ENCODE measurements at regions of chr14 and their contacts with region 1.

Region 1: DNA sequence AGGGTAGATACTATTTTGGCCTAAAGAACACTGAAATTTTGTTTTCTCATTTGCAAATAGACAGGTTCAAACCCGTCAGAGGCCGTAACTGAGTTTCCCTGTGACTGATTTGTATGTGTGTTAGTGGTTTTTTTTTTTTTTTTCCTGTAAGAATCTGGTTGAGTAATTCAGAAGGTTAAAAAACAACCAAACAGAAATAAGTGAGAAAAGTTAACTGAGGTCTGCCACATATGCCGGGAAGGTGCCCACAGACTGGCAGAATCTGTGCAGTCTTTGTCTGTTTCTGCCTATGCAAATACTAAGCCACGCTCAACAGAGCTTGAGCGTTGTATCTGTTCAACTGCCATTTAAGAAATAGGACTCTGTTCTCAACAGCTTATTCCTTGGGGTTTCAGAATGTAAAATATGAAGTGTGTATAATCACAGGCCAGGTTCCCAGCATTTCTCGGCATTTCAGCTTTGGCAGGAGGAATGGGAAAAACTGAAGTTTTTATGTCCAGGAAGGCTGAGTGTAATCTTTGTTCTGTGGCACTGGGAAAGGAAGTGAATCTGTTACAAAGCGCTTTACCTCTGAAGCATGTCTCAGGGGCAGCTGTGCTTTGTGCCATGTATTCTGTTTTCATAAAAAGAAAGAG is 181.9 kb downstream of the PRKCH start:
- DNase-seq: peak; percentile 94
- ATAC-seq: peak; percentile 93
- H3K4me3 ChIP-seq: peak overlapping the region; percentile 19; the same call in 1 of the 2 replicates
- H3K27ac ChIP-seq: peak overlapping the region; percentile 95
- H3K4me1 ChIP-seq: peaks cover 30% of the 10 kb centered on the region
- H3K27me3 ChIP-seq: no peaks in the 10 kb centered on the region
- CTCF ChIP-seq: no peak
- EP300 ChIP-seq: peak; percentile 30 to 87; a peak in 3 of 4 replicates
- POLR2A ChIP-seq: no peak
- RAD21 ChIP-seq: no peak

Region 2: DNA sequence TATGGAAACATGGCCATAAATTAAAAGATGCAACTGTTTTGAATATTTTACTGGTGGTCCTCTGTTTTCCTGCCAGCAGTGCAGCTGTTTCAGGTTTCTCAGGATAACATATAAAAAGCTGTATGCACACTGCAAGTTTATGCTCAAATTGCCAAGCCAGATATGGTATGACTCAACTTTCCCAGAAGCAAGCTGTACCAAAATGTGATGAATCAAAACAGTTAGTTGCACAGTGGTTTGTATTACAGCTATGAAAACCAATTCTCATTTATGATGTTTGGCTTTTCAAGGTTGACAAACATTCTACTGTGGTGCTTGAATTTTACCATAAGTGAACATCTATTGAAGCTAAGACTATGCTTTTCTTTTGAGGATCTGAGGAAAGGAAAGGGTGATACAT is 537.9 kb before region 1 on chr14:
- CTCF ChIA-PET with region 1: no interaction called
- POLR2A ChIA-PET with region 1: no interaction called
- RAD21 ChIA-PET with region 1: no interaction called
- SMC1A ChIA-PET with region 1: no interaction called
- in situ Hi-C with region 1: no loop called
- intact Hi-C with region 1: no loop called
- DNase-seq: no peak
- ATAC-seq: no peak
- H3K4me3 ChIP-seq: no peak overlapping the region
- H3K27ac ChIP-seq: no peak overlapping the region
- H3K4me1 ChIP-seq: no peaks in the 10 kb centered on the region
- H3K27me3 ChIP-seq: no peaks in the 10 kb centered on the region
- CTCF ChIP-seq: no peak
- EP300 ChIP-seq: no peak
- POLR2A ChIP-seq: no peak
- RAD21 ChIP-seq: no peak

Region 3: DNA sequence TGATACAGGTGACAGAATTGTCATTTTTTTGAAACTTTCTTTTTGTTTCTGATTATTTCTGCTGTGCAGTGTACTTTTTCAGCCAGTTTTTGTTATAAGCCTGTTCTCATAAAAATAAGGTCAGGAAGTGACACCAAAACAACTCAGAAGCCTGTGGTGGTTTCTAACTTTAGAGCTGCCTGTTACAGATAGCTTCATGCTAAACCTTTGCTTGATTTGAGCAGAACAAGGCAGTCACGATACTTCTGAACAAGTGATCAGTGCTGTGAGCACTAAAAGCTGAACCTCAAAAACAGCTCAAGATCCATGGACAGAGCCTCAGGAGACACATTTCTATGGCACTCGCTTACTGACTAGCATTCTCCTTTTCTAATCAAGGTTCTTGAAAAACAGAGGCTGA is 99.9 kb before region 1 on chr14:
- CTCF ChIA-PET with region 1: no interaction called
- POLR2A ChIA-PET with region 1: no interaction called
- RAD21 ChIA-PET with region 1: no interaction called
- SMC1A ChIA-PET with region 1: no interaction called
- in situ Hi-C with region 1: no loop called
- intact Hi-C with region 1: no loop called
- DNase-seq: peak; percentile 61
- ATAC-seq: peak; percentile 86
- H3K4me3 ChIP-seq: no peak overlapping the region
- H3K27ac ChIP-seq: peak overlapping the region; percentile 89
- H3K4me1 ChIP-seq: peaks cover 17% of the 10 kb centered on the region
- H3K27me3 ChIP-seq: no peaks in the 10 kb centered on the region
- CTCF ChIP-seq: no peak
- EP300 ChIP-seq: no peak
- POLR2A ChIP-seq: peak; percentile 35; the same call in 1 of the 2 replicates
- RAD21 ChIP-seq: no peak

Region 4: GRCh38 chr14:61420326-61420725 is 83.0 kb before region 1 on chr14:
- CTCF ChIA-PET with region 1: no interaction called
- POLR2A ChIA-PET with region 1: no interaction called
- RAD21 ChIA-PET with region 1: no interaction called
- SMC1A ChIA-PET with region 1: no interaction called
- in situ Hi-C with region 1: no loop called
- intact Hi-C with region 1: no loop called
- DNase-seq: no peak
- ATAC-seq: no peak
- H3K4me3 ChIP-seq: no peak overlapping the region
- H3K27ac ChIP-seq: no peak overlapping the region
- H3K4me1 ChIP-seq: peaks cover 15% of the 10 kb centered on the region; the same call in 1 of the 2 replicates
- H3K27me3 ChIP-seq: no peaks in the 10 kb centered on the region
- CTCF ChIP-seq: no peak
- EP300 ChIP-seq: no peak
- POLR2A ChIP-seq: no peak
- RAD21 ChIP-seq: no peak

Region 5: GRCh38 chr14:61491876-61492440 is 11.3 kb before region 1 on chr14:
- CTCF ChIA-PET with region 1: interaction called, 5 read pairs
- POLR2A ChIA-PET with region 1: no interaction called
- RAD21 ChIA-PET with region 1: interaction called, 4 read pairs
- SMC1A ChIA-PET with region 1: interaction called, 11 read pairs
- in situ Hi-C with region 1: no loop called
- intact Hi-C with region 1: no loop called
- DNase-seq: no peak
- ATAC-seq: no peak
- H3K4me3 ChIP-seq: no peak overlapping the region
- H3K27ac ChIP-seq: no peak overlapping the region
- H3K4me1 ChIP-seq: no peaks in the 10 kb centered on the region
- H3K27me3 ChIP-seq: no peaks in the 10 kb centered on the region
- CTCF ChIP-seq: no peak
- EP300 ChIP-seq: no peak
- POLR2A ChIP-seq: no peak
- RAD21 ChIP-seq: no peak

Region 6: DNA sequence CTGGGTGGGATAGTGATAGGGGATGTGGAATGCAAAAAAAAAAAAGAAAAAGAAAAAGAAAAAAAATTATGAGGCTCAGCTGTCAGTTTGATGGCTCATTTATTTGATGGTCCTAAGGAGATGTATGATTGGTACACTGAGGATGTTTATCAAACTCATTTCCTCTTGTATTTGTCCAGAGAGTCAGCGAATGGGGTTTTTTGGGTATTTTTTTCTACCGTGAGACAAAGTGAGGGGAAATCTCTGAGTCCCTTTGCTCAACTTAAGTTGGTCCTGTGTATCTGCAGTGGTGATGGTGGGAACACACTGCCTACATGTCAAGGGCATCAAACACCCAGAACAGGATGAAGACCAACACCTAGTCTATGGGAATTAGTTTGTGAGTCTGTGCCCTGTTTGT is 15.1 kb after region 1 on chr14:
- CTCF ChIA-PET with region 1: interaction called, 3 read pairs
- POLR2A ChIA-PET with region 1: interaction called, 12 read pairs
- RAD21 ChIA-PET with region 1: interaction called, 30 read pairs
- SMC1A ChIA-PET with region 1: interaction called, 38 read pairs
- in situ Hi-C with region 1: no loop called
- intact Hi-C with region 1: no loop called
- DNase-seq: peak; percentile 48
- ATAC-seq: peak; percentile 52
- H3K4me3 ChIP-seq: no peak overlapping the region
- H3K27ac ChIP-seq: no peak overlapping the region
- H3K4me1 ChIP-seq: no peaks in the 10 kb centered on the region
- H3K27me3 ChIP-seq: no peaks in the 10 kb centered on the region
- CTCF ChIP-seq: no peak
- EP300 ChIP-seq: no peak
- POLR2A ChIP-seq: no peak
- RAD21 ChIP-seq: no peak

Region 7: GRCh38 chr14:61525293-61526011 is 22.2 kb after region 1 on chr14:
- CTCF ChIA-PET with region 1: interaction called, 4 read pairs
- POLR2A ChIA-PET with region 1: interaction called, 12 read pairs
- RAD21 ChIA-PET with region 1: interaction called, 30 read pairs
- SMC1A ChIA-PET with region 1: interaction called, 38 read pairs
- in situ Hi-C with region 1: no loop called
- intact Hi-C with region 1: no loop called
- DNase-seq: peak; percentile 85
- ATAC-seq: peak; percentile 88
- H3K4me3 ChIP-seq: peak overlapping the region; percentile 34; the same call in 1 of the 2 replicates
- H3K27ac ChIP-seq: peak overlapping the region; percentile 60
- H3K4me1 ChIP-seq: peaks cover 15% of the 10 kb centered on the region
- H3K27me3 ChIP-seq: no peaks in the 10 kb centered on the region
- CTCF ChIP-seq: no peak
- EP300 ChIP-seq: peak; percentile 35 to 56; a peak in 2 of 4 replicates
- POLR2A ChIP-seq: no peak
- RAD21 ChIP-seq: no peak

Region 8: GRCh38 chr14:61553725-61554641 is 50.7 kb after region 1 on chr14:
- CTCF ChIA-PET with region 1: interaction called, 3 read pairs
- POLR2A ChIA-PET with region 1: no interaction called
- RAD21 ChIA-PET with region 1: interaction called, 6 read pairs
- SMC1A ChIA-PET with region 1: interaction called, 19 read pairs
- in situ Hi-C with region 1: no loop called
- intact Hi-C with region 1: no loop called
- DNase-seq: no peak
- ATAC-seq: no peak
- H3K4me3 ChIP-seq: no peak overlapping the region
- H3K27ac ChIP-seq: no peak overlapping the region
- H3K4me1 ChIP-seq: peaks cover 15% of the 10 kb centered on the region
- H3K27me3 ChIP-seq: no peaks in the 10 kb centered on the region
- CTCF ChIP-seq: no peak
- EP300 ChIP-seq: no peak
- POLR2A ChIP-seq: no peak
- RAD21 ChIP-seq: no peak

Region 9: DNA sequence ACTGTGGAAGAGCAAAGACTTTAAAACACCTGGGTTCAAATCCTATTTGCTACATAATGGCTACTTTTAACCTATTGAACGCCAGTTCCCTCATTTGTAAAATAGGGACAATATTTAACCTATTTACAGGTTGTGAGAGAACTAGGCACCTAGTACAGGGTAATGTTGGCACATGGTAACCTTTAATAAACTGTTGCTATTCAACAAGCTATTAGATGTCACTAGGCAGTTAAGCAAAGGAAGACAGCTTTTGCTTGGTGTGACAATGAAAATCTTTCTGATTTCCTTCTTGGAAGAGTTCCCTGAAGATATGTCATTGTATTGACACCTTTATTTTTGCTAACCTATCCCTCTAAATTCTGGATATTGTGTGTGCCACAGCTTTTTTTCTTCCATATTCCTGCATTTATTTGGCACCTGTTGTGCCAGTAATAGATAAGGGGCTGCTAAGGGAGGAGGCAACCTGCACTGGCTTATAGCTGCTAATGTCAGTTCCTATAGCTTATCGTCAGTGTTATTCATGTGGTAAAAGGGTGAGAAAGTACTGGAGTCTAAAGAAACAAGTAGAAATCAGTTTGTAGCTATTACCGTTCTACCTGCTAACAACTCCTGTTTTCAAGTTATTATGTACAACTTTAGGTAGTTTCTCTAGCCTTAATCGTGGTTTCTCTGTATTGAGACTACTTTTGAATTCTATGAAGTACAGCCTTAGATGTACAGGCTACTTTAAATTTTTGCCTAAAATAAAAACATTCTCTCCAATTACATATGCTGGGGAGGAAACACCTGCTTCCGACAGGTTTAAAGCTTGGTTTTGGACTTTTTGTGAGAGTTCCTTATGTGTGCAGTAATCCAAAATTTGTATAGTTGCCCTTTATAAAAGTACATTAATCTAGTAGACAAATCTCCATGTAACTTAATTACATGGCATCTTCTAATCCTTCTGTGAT is 216.3 kb after region 1 on chr14:
- CTCF ChIA-PET with region 1: interaction called, 3 read pairs
- POLR2A ChIA-PET with region 1: interaction called, 6 read pairs
- RAD21 ChIA-PET with region 1: interaction called, 3 read pairs
- SMC1A ChIA-PET with region 1: interaction called, 11 read pairs
- in situ Hi-C with region 1: no loop called
- intact Hi-C with region 1: no loop called
- DNase-seq: no peak
- ATAC-seq: peak; percentile 48
- H3K4me3 ChIP-seq: no peak overlapping the region; the same call in 1 of the 2 replicates
- H3K27ac ChIP-seq: peak overlapping the region; percentile 15; the same call in 1 of the 2 replicates
- H3K4me1 ChIP-seq: peaks cover 20% of the 10 kb centered on the region
- H3K27me3 ChIP-seq: no peaks in the 10 kb centered on the region
- CTCF ChIP-seq: no peak
- EP300 ChIP-seq: no peak
- POLR2A ChIP-seq: no peak
- RAD21 ChIP-seq: no peak